IMR-90 (cell line): ENCODE measurements at regions of chr15 and their contacts with region 1.

Region 1: DNA sequence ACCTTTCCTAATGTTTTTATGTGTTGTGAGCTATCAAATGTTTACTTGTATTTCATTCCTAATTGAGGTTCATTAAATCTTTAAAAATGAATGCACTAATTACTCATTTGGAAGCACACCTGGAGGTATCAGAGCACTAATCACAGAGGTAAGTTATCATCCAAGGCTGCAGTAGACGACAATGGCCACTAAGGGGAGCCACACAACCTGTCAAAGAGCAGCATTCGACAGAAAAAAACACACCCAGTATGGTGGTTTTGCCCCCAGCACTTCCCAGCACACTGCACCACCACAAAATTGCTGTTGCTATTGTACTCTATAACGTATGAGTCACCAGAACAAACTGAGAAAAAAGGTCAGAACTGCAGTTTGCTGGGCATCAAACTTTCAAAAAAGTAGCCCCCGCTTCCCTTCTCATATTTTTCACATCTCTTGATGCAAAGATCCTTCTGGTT is 205.9 kb upstream of the IGF1R start:
- DNase-seq: peak; percentile 82
- ATAC-seq: peak; percentile 98
- H3K4me3 ChIP-seq: no peak overlapping the region
- H3K27ac ChIP-seq: no peak overlapping the region
- H3K4me1 ChIP-seq: no peaks in the 10 kb centered on the region
- H3K27me3 ChIP-seq: peaks cover 17% of the 10 kb centered on the region
- CTCF ChIP-seq: peak; percentile 79
- POLR2A ChIP-seq: no peak
- RAD21 ChIP-seq: peak; percentile 84

Region 2: GRCh38 chr15:98187549-98187948 is 254.9 kb before region 1 on chr15:
- CTCF ChIA-PET with region 1: no interaction called
- POLR2A ChIA-PET with region 1: no interaction called
- dilution Hi-C with region 1: no loop called
- in situ Hi-C with region 1: no loop called
- intact Hi-C with region 1: no loop called
- DNase-seq: no peak
- ATAC-seq: no peak
- H3K4me3 ChIP-seq: no peak overlapping the region
- H3K27ac ChIP-seq: no peak overlapping the region
- H3K4me1 ChIP-seq: no peaks in the 10 kb centered on the region
- H3K27me3 ChIP-seq: no peaks in the 10 kb centered on the region
- CTCF ChIP-seq: no peak
- POLR2A ChIP-seq: no peak
- RAD21 ChIP-seq: no peak

Region 3: GRCh38 chr15:98658831-98659699 is 216.7 kb after region 1 on chr15:
- CTCF ChIA-PET with region 1: interaction called, 3 read pairs
- POLR2A ChIA-PET with region 1: no interaction called
- dilution Hi-C with region 1: no loop called
- in situ Hi-C with region 1: no loop called
- intact Hi-C with region 1: loop called (anchors 1 kb)
- DNase-seq: peak; percentile 60
- ATAC-seq: peak; percentile 84
- H3K4me3 ChIP-seq: no peak overlapping the region
- H3K27ac ChIP-seq: no peak overlapping the region
- H3K4me1 ChIP-seq: peaks cover 20% of the 10 kb centered on the region
- H3K27me3 ChIP-seq: no peaks in the 10 kb centered on the region
- CTCF ChIP-seq: peak; percentile 74
- POLR2A ChIP-seq: no peak
- RAD21 ChIP-seq: peak; percentile 64

Region 4: GRCh38 chr15:98719137-98719740 is 276.8 kb after region 1 on chr15:
- CTCF ChIA-PET with region 1: no interaction called
- POLR2A ChIA-PET with region 1: no interaction called
- dilution Hi-C with region 1: no loop called
- in situ Hi-C with region 1: no loop called
- intact Hi-C with region 1: no loop called
- DNase-seq: no peak
- ATAC-seq: peak; percentile 72
- H3K4me3 ChIP-seq: no peak overlapping the region
- H3K27ac ChIP-seq: no peak overlapping the region
- H3K4me1 ChIP-seq: peaks cover 51% of the 10 kb centered on the region
- H3K27me3 ChIP-seq: no peaks in the 10 kb centered on the region
- CTCF ChIP-seq: no peak
- POLR2A ChIP-seq: no peak
- RAD21 ChIP-seq: no peak

Region 5: GRCh38 chr15:98881526-98882520 is 439.4 kb after region 1 on chr15:
- CTCF ChIA-PET with region 1: no interaction called
- POLR2A ChIA-PET with region 1: no interaction called
- dilution Hi-C with region 1: no loop called
- in situ Hi-C with region 1: loop called (anchors 10 kb)
- intact Hi-C with region 1: no loop called
- DNase-seq: peak; percentile 72
- ATAC-seq: peak; percentile 25; the same call in 1 of the 2 replicates
- H3K4me3 ChIP-seq: no peak overlapping the region
- H3K27ac ChIP-seq: no peak overlapping the region
- H3K4me1 ChIP-seq: peaks cover 19% of the 10 kb centered on the region
- H3K27me3 ChIP-seq: no peaks in the 10 kb centered on the region
- CTCF ChIP-seq: peak; percentile 60
- POLR2A ChIP-seq: no peak
- RAD21 ChIP-seq: peak; percentile 65

Region 6: GRCh38 chr15:99059010-99059981 is 616.9 kb after region 1 on chr15:
- CTCF ChIA-PET with region 1: no interaction called
- POLR2A ChIA-PET with region 1: no interaction called
- dilution Hi-C with region 1: no loop called
- in situ Hi-C with region 1: no loop called
- intact Hi-C with region 1: loop called (anchors 5 kb)
- DNase-seq: peak; percentile 87
- ATAC-seq: peak; percentile 99
- H3K4me3 ChIP-seq: peak overlapping the region; percentile 47
- H3K27ac ChIP-seq: peak overlapping the region; percentile 82
- H3K4me1 ChIP-seq: peaks cover 3% of the 10 kb centered on the region
- H3K27me3 ChIP-seq: no peaks in the 10 kb centered on the region
- CTCF ChIP-seq: peak; percentile 96
- POLR2A ChIP-seq: peak; percentile 58
- RAD21 ChIP-seq: peak; percentile 84

Region 7: DNA sequence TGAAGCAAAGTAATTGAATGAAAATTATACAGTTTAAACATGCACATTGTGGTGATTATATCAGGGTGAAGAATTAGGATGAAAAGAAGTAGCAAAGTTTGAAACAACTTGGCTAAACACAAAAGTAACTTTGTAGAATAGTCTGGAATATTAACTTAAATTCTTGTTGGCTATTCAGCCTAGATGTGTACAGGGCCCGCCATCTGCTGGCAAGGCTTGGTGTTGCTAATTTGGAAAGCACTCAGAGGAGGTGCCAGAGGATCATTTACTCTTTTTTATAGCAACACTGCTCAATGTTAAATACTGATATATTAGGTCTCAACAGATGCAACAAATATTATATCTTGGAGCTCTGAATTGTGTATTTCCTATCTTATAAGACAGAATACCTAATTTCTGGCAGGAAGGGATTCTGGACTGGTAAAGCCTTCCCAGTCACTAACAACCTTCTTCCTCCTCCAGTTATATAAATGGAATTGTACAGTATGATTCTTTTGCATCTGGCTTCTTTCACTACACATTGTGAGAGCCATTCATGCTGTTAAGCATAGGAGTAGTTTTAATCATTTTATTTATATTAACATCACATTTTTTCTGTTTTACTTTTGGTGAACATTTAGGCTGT is 770.9 kb after region 1 on chr15:
- CTCF ChIA-PET with region 1: no interaction called
- POLR2A ChIA-PET with region 1: no interaction called
- dilution Hi-C with region 1: no loop called
- in situ Hi-C with region 1: loop called (anchors 25 kb)
- intact Hi-C with region 1: loop called (anchors 1 kb)
- DNase-seq: peak; percentile 67
- ATAC-seq: peak; percentile 79
- H3K4me3 ChIP-seq: no peak overlapping the region
- H3K27ac ChIP-seq: no peak overlapping the region
- H3K4me1 ChIP-seq: no peaks in the 10 kb centered on the region
- H3K27me3 ChIP-seq: no peaks in the 10 kb centered on the region
- CTCF ChIP-seq: peak; percentile 96
- POLR2A ChIP-seq: no peak; the same call in 1 of the 2 replicates
- RAD21 ChIP-seq: peak; percentile 97